Psoas muscle (tissue), 8 donors: ENCODE measurements at regions of chr15 and their contacts with region 1.

Region 1: GRCh38 chr15:86295511-86295910 is 215.8 kb downstream of the AGBL1 start:
- DNase-seq: no peak
- ATAC-seq: no peak
- H3K4me3 ChIP-seq: no peak overlapping the region
- H3K27ac ChIP-seq: no peak overlapping the region
- H3K4me1 ChIP-seq: no peaks in the 10 kb centered on the region
- H3K27me3 ChIP-seq: peaks cover 0 to 2% (median 0%) of the 10 kb centered on the region in 3 donors
- CTCF ChIP-seq: no peak

Region 2: GRCh38 chr15:86231864-86232721 is 63.4 kb before region 1 on chr15:
- intact Hi-C with region 1: loop called in 1 of 2 experiments (anchors 10 kb)
- DNase-seq: peak in 1 of 2 donors; percentile 15
- ATAC-seq: peak in 3 of 4 donors; percentile 55 to 72 (median 61)
- H3K4me3 ChIP-seq: no peak overlapping the region
- H3K27ac ChIP-seq: no peak overlapping the region
- H3K4me1 ChIP-seq: no peaks in the 10 kb centered on the region
- H3K27me3 ChIP-seq: no peaks in the 10 kb centered on the region
- CTCF ChIP-seq: peak; percentile 42